Panc1 (cell line): ENCODE measurements at regions of chr7 and their contacts with region 1.

Region 1: DNA sequence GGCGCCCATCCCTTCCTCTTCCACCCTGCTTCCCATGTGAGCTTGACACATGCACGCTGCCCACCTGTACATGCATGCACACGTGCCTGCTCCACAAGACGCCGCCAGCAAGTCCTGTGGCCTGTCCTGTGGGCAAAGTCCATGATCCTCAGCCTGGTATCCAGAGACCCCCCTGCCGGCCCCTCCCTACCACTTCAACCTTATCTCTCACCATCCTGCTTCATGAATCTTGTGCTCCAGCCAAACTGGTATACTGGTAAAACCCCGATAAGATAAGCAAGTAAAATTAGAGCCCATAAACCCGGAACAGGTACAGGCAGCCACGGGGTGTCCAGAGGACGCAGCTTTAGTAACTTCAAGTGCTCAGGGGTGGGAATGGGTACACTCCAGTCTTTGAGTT is 11.8 kb upstream of the TBXAS1 start:
- DNase-seq: no peak
- ATAC-seq: no peak
- H3K4me3 ChIP-seq: no peak overlapping the region
- H3K27ac ChIP-seq: no peak overlapping the region
- H3K4me1 ChIP-seq: no peaks in the 10 kb centered on the region
- H3K27me3 ChIP-seq: no peaks in the 10 kb centered on the region
- CTCF ChIP-seq: no peak

Region 2: DNA sequence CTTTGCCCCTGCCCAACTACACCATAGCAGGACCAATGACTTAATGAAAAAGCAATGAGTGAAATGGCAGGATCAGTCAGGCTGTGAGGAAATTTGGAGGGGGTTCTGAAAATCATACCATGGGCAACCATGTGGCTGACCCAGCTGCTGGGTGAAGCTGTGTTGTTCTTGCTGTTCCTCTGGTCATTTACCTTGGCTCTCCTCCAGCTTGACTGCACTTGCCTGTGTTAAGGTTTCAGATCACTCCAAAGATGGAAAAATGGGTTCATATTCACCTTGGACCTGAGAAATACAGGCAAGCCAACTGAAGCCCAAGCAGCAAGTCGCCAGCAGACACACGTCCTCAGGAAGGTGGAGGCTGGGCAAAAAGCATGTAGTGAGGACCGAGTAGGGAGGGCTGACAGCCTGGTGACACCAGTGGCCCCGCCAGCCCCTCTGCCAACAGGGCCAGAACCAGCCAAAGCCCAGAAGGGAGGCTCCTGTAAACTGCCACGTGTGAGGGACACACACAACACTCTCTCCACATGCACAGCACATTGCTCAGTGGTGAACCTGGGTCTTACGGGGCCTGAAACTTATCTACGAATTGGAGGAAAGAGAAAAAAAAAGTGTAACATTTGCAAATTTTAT is 205.4 kb after region 1 on chr7:
- CTCF ChIA-PET with region 1: no interaction called
- POLR2A ChIA-PET with region 1: interaction called, 10 read pairs
- in situ Hi-C with region 1: no loop called
- intact Hi-C with region 1: no loop called
- DNase-seq: no peak
- ATAC-seq: no peak
- H3K4me3 ChIP-seq: no peak overlapping the region
- H3K27ac ChIP-seq: no peak overlapping the region
- H3K4me1 ChIP-seq: no peaks in the 10 kb centered on the region
- H3K27me3 ChIP-seq: no peaks in the 10 kb centered on the region
- CTCF ChIP-seq: no peak